ENCODE measurements at regions of chr14 and their contacts with region 1.

Region 1: GRCh38 chr14:66932793-66933108 is 256.5 kb upstream of the GARIN2 start:
- DNase-seq: no peak
- ATAC-seq: no peak
- H3K4me3 ChIP-seq: no peak overlapping the region
- H3K27ac ChIP-seq: peak overlapping the region; percentile 13; the same call in 1 of the 2 replicates
- H3K4me1 ChIP-seq: peaks cover 21% of the 10 kb centered on the region
- H3K27me3 ChIP-seq: no peaks in the 10 kb centered on the region
- CTCF ChIP-seq: no peak

Region 2: DNA sequence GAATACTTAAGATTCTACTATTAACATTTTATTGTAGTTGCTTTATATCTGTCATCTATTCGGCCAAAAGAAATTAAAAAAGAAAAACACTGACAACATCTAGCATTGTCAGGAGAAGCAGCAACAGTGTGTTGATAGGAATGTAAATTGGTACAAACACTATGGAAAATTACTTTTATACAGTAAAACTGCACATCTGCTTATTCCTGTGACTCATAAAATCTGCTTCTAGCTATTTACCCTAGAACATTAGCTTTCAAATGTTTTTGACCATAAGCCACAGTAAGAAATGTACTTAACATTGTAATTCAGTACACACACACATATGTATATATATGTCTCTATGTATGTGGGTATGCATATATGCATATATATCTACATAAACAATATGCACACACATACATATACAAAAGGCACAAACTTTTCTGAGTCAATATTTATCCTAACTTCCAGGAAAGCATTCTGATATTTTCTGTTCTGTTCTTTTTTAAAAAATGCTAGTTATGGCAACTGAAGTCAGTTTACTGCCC is 22.4 kb before region 1 on chr14:
- CTCF ChIA-PET with region 1: no interaction called
- POLR2A ChIA-PET with region 1: no interaction called
- intact Hi-C with region 1: no loop called
- DNase-seq: peak; percentile 15
- ATAC-seq: peak; percentile 90
- H3K4me3 ChIP-seq: no peak overlapping the region
- H3K27ac ChIP-seq: no peak overlapping the region
- H3K4me1 ChIP-seq: peaks cover 7% of the 10 kb centered on the region; the same call in 1 of the 2 replicates
- H3K27me3 ChIP-seq: no peaks in the 10 kb centered on the region
- CTCF ChIP-seq: no peak

Region 3: DNA sequence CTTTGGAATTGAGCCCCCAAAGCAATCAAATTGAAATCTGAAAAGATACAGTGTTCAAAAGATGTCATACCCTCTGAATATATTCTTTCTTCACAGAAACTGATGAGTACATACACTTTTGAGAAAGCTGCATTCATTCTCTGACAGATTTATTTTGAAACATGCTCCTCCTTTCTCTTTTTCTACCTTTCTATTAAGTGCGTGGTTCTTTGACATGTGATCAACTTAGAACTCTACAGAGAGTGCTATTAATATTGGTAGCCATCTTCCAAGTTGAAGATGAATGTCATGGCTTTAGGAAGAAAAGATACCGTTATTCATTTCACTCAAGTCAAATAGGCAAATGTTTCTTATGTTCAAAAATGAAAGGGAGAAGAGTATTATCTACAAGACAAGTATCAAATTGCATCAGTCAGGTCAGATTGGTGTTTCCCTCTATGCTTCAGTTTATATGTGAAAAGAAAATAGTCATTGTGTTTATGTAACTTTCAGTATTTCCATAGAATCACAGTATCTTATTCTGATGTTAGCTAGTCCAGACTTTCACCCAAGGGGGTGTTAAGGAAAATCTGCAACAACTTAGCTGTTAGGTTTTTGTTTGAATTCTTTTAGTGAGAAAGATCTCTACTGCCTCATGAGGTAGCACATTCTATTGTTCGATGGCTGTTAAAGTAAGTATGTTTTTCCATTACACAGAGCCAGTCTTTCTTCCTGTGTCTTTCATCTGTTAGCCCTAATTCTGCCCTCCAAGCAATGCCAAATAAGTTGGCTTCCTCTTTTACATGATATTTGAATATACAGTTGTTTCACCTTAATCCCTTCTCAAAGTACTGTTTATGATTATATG is 201.1 kb after region 1 on chr14:
- CTCF ChIA-PET with region 1: no interaction called
- POLR2A ChIA-PET with region 1: no interaction called
- intact Hi-C with region 1: no loop called
- DNase-seq: no peak
- ATAC-seq: peak; percentile 50; the same call in 1 of the 2 replicates
- H3K4me3 ChIP-seq: no peak overlapping the region
- H3K27ac ChIP-seq: no peak overlapping the region
- H3K4me1 ChIP-seq: no peaks in the 10 kb centered on the region
- H3K27me3 ChIP-seq: no peaks in the 10 kb centered on the region
- CTCF ChIP-seq: no peak

Region 4: GRCh38 chr14:67674481-67675169 is 741.9 kb after region 1 on chr14 and contains the start of gene VTI1B:
- CTCF ChIA-PET with region 1: interaction called, 16 read pairs
- POLR2A ChIA-PET with region 1: no interaction called
- intact Hi-C with region 1: no loop called
- DNase-seq: peak; percentile 83
- ATAC-seq: peak; percentile 81
- H3K4me3 ChIP-seq: peak within 1 kb of the TSS; percentile 84
- H3K27ac ChIP-seq: peak within 1 kb of the TSS; percentile 80
- H3K4me1 ChIP-seq: peaks cover 19% of the 10 kb centered on the region
- H3K27me3 ChIP-seq: no peaks in the 10 kb centered on the region
- CTCF ChIP-seq: peak; percentile 30; the same call in 1 of the 2 replicates
- total RNA-seq, gene VTI1B: 72.6 and 93.8 TPM in 2 replicates

Measured in PC-3 (cell line).